ENCODE measurements at regions of chr22 and their contacts with region 1.

Region 1: GRCh38 chr22:20568989-20569769 is 61.8 kb downstream of the MED15 start:
- DNase-seq: peak; percentile 76
- H3K4me3 Mint-ChIP-seq: peak overlapping the region; percentile 53
- H3K27ac Mint-ChIP-seq: peak overlapping the region; percentile 69
- H3K4me1 Mint-ChIP-seq: peaks cover 66% of the 10 kb centered on the region
- H3K27me3 Mint-ChIP-seq: no peaks in the 10 kb centered on the region

Region 2: GRCh38 chr22:20523086-20523983 is 45.8 kb before region 1 on chr22:
- intact Hi-C with region 1: loop called (anchors 2 kb)
- DNase-seq: no peak
- H3K4me3 Mint-ChIP-seq: peak overlapping the region; percentile 19
- H3K27ac Mint-ChIP-seq: peak overlapping the region; percentile 47
- H3K4me1 Mint-ChIP-seq: peaks cover 56% of the 10 kb centered on the region
- H3K27me3 Mint-ChIP-seq: no peaks in the 10 kb centered on the region

Region 3: DNA sequence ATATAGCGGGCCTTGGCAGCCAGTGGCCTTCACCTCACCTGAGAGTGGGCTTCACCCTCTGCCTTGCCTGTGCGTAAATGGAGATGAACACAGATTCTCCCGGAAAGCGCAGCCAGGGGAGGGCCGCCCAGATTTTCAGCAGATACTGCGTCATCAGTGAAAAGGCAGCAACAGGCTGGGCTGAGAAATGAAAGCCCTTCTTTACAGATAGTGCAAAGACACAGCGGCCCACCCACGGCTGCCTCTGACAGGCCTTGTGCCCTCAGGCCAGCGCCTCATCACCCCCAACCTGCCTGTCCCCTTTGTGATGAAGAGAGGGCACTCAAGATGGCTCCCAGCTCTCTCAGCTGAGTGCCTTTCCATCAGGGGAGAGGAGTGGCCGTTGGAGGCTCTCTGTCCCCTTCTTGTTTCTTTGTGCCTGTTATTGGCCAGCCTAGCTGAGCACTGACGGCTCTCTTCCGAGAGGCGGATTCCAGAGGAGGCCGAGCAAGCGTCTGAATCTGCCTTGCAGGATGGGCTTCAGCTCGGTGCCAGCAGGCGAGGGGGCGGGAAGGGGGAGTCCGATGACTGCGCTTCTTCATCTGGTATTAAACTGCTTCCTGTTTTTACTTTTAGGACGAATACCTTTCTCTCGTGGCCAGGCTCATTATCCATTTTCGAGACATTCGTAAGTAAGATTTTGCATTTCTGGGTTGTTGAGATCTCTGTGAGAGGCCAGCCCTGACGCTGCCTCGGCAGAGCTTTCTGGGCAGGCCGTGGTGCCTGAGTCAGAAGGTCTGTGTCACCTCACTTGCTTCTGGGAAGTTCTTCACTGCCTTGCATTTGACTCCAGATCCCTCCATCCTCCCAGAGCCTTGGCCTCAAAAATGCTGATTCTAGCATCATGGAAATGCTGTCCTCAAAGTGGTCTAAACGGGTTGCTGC is 18.1 kb before region 1 on chr22:
- intact Hi-C with region 1: loop called (anchors 2 kb)
- DNase-seq: no peak
- H3K4me3 Mint-ChIP-seq: peak overlapping the region; percentile 75
- H3K27ac Mint-ChIP-seq: peak overlapping the region; percentile 95
- H3K4me1 Mint-ChIP-seq: peaks cover 61% of the 10 kb centered on the region
- H3K27me3 Mint-ChIP-seq: no peaks in the 10 kb centered on the region

Region 4: GRCh38 chr22:20761536-20761935 is 192.4 kb after region 1 on chr22:
- intact Hi-C with region 1: no loop called
- DNase-seq: no peak
- H3K4me3 Mint-ChIP-seq: no peak overlapping the region
- H3K27ac Mint-ChIP-seq: no peak overlapping the region
- H3K4me1 Mint-ChIP-seq: no peaks in the 10 kb centered on the region
- H3K27me3 Mint-ChIP-seq: no peaks in the 10 kb centered on the region

Region 5: GRCh38 chr22:20858615-20859416 is 289.6 kb after region 1 on chr22 and contains the starts of genes PI4KA and SNAP29:
- intact Hi-C with region 1: loop called (anchors 10 kb)
- DNase-seq: peak; percentile 97
- H3K4me3 Mint-ChIP-seq: peak within 1 kb of the TSS; percentile 85
- H3K27ac Mint-ChIP-seq: peak within 1 kb of the TSS; percentile 88
- H3K4me1 Mint-ChIP-seq: peaks cover 51% of the 10 kb centered on the region
- H3K27me3 Mint-ChIP-seq: peaks cover 2% of the 10 kb centered on the region
- total RNA-seq, gene PI4KA: 80.4 and 84.7 TPM in 2 replicates
- total RNA-seq, gene SNAP29: 24.6 and 27.7 TPM in 2 replicates